GM18951 (cell line): ENCODE measurements at regions of chr5 and their contacts with region 1.

Region 1: DNA sequence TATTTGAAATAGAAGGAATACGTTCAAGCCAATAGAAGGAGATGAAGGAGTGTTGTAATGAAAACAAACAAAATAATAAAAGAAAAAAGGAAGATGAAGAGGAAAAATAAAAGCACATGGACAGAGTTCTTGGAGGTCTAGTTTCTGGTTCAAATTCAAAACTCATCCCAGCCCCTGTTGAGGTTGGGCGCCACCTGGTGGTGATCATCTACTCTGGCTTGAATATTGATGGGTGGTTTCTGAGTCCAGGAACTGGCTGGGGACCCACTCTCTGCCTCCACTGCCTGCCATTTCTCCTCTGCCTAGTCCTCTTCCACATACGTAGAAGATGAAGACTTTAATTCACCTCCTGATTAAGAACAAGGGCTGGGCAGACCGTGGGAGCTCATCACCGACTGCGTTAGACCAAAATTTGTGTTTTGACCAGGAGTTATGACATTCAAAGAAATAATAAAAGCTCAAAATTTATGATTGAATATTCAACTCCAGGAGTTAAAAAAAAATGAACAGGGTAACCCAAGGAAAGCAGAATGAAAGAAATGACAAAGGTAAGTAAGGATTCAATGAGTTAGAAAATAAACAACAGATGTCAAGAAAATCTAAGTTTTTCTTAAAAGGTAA is 99.0 kb upstream of the SLC1A3 start:
- POLR2A ChIP-seq: no peak

Region 2: GRCh38 chr5:36414869-36415282 is 92.6 kb before region 1 on chr5:
- in situ Hi-C with region 1: loop called (anchors 10 kb)
- POLR2A ChIP-seq: no peak